ENCODE measurements at regions of chr7 and their contacts with region 1.

Region 1: GRCh38 chr7:152336754-152337368 is 98.9 kb downstream of the KMT2C start:
- DNase-seq: peak; percentile 58
- H3K4me3 Mint-ChIP-seq: no peak overlapping the region
- H3K27ac Mint-ChIP-seq: no peak overlapping the region
- H3K4me1 Mint-ChIP-seq: peaks cover 10% of the 10 kb centered on the region
- H3K27me3 Mint-ChIP-seq: no peaks in the 10 kb centered on the region
- CTCF ChIP-seq: peak; percentile 49

Region 2: DNA sequence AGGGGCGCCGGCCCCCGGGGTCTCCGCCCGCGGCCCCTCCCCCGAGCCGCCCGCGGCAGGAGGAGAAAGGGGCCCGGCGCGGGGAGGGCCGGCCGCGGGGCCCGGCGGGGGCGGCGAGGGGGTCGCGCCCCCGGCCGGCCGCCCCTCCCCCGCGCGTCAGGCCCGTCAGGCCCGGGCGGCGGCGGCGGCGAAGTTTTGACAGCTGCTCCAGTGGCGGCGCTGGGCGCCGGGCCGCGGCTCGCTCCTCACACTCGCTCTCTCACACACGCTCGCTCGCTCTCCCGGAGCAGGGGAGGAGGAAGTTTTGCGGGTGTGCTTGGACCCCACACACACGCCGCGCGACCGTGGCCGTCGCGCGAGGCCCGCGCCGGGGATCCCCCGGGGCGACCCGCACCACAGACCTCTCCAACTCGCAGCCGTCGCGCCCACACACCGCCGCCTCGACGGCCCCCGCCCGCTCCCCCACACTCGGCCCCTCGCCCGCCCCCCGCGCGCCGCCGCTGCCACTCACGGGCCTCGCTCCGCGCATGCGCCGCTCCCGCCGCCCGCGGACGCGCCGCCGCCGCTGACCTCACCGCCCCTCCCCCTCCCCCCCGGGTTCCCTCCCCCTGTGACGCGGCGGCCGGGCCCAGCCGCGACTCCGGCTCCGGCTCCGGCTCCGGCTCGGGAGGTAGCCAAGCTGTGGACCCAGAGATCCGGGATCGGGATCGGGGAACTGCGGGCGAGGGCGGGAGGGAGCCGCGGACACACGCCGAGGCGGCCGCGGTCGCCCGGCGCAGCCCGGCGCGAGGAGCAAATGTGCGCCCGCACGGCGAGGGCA is 99.5 kb after region 1 on chr7:
- CTCF ChIA-PET with region 1: interaction called, 8 read pairs
- POLR2A ChIA-PET with region 1: interaction called, 5 read pairs
- intact Hi-C with region 1: loop called (anchors 2 kb)
- DNase-seq: peak; percentile 90
- H3K4me3 Mint-ChIP-seq: peak overlapping the region; percentile 88
- H3K27ac Mint-ChIP-seq: peak overlapping the region; percentile 66
- H3K4me1 Mint-ChIP-seq: peaks cover 16% of the 10 kb centered on the region
- H3K27me3 Mint-ChIP-seq: no peaks in the 10 kb centered on the region
- CTCF ChIP-seq: no peak

Region 3: DNA sequence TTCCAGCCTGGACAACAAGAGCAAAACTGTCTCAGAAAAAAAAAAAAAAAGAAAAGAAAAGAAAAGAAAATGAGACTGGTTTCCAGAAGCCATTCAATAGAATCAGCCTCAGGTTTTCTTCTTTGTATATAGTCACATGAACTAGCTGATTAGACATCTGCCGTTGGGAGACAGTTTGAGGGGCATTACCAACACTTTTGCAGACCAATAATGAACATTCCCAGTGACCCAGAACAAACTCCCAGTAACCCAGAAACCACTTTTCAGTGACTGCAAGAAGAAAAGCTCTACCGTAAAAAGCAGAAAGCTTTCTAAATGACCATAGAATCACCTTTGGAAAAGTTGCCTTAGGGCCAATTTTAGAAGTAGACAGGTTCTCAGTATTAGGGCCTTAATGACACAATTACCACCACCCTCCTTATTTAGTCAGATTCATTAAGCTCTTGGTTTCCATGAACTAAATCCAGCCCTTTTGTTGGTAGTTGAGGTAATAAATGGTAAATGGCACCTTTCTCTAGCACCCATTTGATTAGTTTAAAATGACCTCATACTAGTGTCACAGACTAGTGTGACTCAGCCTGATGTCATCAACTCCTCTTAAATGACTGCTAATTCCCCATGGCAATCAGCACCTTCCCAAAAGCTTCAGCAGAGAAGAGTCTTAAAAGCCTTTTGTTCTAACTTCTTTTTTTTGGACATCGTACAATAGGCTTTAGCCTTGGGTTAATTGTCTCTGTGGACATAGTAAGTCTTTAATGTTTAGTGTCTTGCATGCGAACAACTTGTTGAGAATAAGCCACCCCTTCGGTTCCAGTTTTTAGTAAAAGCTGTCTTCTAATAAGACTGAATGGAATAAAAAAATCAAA is 372.7 kb after region 1 on chr7:
- CTCF ChIA-PET with region 1: interaction called, 10 read pairs
- POLR2A ChIA-PET with region 1: no interaction called
- intact Hi-C with region 1: loop called (anchors 1 kb)
- DNase-seq: peak; percentile 41
- H3K4me3 Mint-ChIP-seq: no peak overlapping the region
- H3K27ac Mint-ChIP-seq: no peak overlapping the region
- H3K4me1 Mint-ChIP-seq: no peaks in the 10 kb centered on the region
- H3K27me3 Mint-ChIP-seq: no peaks in the 10 kb centered on the region
- CTCF ChIP-seq: no peak